Keratinocyte (primary cell): ENCODE measurements at regions of chr16 and their contacts with region 1.

Region 1: DNA sequence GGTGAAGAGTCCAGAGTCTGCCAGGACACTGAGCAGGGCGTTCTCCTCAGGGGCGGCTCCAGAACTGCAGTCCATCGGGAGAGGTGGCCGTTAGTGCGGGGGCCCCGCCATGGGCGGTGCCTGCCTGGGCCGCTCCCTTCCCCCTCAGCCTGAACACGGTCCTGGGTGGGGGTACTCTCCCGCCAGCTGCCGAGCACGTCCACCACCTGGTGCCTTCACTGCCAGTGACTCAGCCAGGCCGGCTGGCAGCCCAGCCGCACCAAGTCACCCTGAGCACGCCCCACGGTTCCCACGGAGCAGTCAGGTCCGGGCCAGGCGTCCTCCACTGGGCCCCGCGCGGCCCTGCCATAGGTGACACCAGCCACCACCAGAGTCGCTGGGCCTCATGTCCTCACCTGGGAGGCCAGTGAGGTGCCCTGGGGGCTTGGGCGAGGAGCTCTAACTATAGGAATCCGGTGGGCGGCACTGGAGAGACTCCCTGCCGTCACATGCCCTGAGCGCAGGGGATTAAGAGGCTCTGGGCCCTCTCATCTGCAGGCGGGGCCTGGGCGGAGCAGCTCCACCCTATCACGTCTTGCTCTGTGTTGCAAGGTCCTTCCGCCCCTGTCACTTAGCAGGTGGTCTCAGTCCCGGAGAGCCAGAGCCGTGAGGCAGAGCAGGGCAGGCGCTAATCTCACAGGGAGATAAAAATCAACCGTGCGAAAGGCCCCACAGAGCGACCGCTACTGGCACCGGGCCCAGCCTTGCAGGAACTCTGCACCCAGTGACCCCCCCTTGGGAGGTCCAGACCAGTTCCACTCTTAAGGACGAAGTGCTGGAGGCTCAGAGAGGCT is 14.3 kb downstream of the PIEZO1 start:
- DNase-seq: peak; percentile 49
- H3K4me3 ChIP-seq: peak overlapping the region in 2 of 3 experiments; percentile 37 to 38
- H3K27ac ChIP-seq: peak overlapping the region; percentile 81
- H3K4me1 ChIP-seq: peaks cover 33% of the 10 kb centered on the region
- H3K27me3 ChIP-seq: no peaks in the 10 kb centered on the region
- CTCF ChIP-seq: no peak

Region 2: GRCh38 chr16:88662843-88663606 is 107.7 kb before region 1 on chr16 and contains the start of gene MVD:
- dilution Hi-C with region 1: loop called (anchors 25 kb)
- DNase-seq: peak; percentile 86
- H3K4me3 ChIP-seq: peak within 1 kb of the TSS; percentile 76 to 96 (median 84)
- H3K27ac ChIP-seq: peak within 1 kb of the TSS; percentile 82
- H3K4me1 ChIP-seq: peaks cover 19% of the 10 kb centered on the region
- H3K27me3 ChIP-seq: no peaks in the 10 kb centered on the region
- CTCF ChIP-seq: no peak
- polyA plus RNA-seq, gene MVD: 59.6 to 85.7 TPM (median 70.6 TPM) in 3 replicates

Region 3: DNA sequence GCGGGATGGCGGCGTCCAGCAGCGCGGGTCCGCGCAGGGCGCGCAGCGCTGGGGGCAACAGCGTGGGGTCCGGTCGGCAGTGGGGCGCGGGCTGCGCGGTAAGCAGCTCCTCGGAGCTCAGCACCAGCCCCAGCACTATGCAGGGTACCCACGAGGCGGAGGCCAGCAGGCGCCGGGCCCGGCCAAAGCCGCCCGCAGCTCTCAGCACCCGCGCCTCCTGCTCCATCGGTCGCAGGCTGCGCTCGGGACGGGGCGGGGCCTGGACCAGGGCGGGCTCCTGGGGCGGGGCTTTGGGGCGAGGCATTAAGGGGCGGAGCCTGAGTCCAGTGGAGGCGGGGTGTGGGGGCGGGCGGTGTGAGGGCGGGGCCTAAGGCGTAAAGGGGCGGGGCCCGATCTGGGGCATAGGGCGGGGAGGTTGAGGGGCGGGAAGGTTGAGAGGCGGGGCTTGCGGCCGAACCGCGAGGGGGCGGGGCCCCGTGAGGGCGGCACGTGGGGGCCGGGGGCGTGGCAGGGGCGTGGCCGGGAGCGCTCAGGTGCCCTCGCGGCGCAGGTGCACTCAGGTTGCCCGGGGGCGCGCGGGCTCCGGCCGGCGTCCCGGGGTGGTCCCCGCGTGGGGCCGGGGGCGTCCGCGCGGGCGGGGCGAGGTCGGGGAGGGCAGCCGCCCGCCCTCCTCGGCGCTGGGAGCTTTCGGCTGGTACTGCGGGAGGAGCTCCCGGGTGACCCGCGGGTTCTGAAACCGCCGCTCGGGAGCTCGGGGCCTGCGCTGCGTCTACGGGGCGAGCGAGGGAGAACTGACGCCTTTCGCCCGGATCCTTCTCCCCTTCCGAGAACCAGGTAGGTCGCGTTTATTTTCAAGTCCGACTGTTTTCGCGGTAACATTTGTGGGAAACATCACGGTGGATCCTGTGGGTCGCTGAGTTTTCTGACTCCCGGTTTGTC is 431.0 kb after region 1 on chr16:
- dilution Hi-C with region 1: no loop called
- DNase-seq: peak; percentile 55
- H3K4me3 ChIP-seq: peak overlapping the region in 2 of 3 experiments; percentile 8 to 38
- H3K27ac ChIP-seq: no peak overlapping the region
- H3K4me1 ChIP-seq: no peaks in the 10 kb centered on the region
- H3K27me3 ChIP-seq: peaks cover 35% of the 10 kb centered on the region
- CTCF ChIP-seq: no peak